GM12878 (cell line): ENCODE measurements at regions of chr1 and their contacts with region 1.

Region 1: GRCh38 chr1:62407405-62408009 is 29.3 kb upstream of the USP1 start:
- DNase-seq: no peak
- ATAC-seq: peak; percentile 74
- H3K4me3 ChIP-seq: no peak overlapping the region
- H3K27ac ChIP-seq: no peak overlapping the region
- H3K4me1 ChIP-seq: no peaks in the 10 kb centered on the region
- H3K27me3 ChIP-seq: no peaks in the 10 kb centered on the region; a peak in 1 of 4 replicates
- CTCF ChIP-seq: peak; percentile 64 to 73 (median 71)
- EP300 ChIP-seq: no peak
- POLR2A ChIP-seq: no peak
- RAD21 ChIP-seq: peak; percentile 82

Region 2: GRCh38 chr1:62175568-62176179 is 231.8 kb before region 1 on chr1:
- CTCF ChIA-PET with region 1: interaction called, 51 read pairs
- POLR2A ChIA-PET with region 1: no interaction called
- RAD21 ChIA-PET with region 1: interaction called, 24 read pairs
- SMC1A ChIA-PET with region 1: interaction called, 25 read pairs
- in situ Hi-C with region 1: loop called (anchors 5 kb)
- intact Hi-C with region 1: loop called (anchors 1 kb)
- DNase-seq: no peak
- ATAC-seq: peak; percentile 75
- H3K4me3 ChIP-seq: no peak overlapping the region
- H3K27ac ChIP-seq: no peak overlapping the region
- H3K4me1 ChIP-seq: no peaks in the 10 kb centered on the region
- H3K27me3 ChIP-seq: no peaks in the 10 kb centered on the region
- CTCF ChIP-seq: peak; percentile 64 to 71 (median 69); a peak in 5 of 6 replicates
- EP300 ChIP-seq: no peak
- POLR2A ChIP-seq: no peak
- RAD21 ChIP-seq: peak; percentile 88

Region 3: GRCh38 chr1:62295921-62296491 is 111.5 kb before region 1 on chr1:
- CTCF ChIA-PET with region 1: no interaction called
- POLR2A ChIA-PET with region 1: no interaction called
- RAD21 ChIA-PET with region 1: no interaction called
- SMC1A ChIA-PET with region 1: interaction called, 5 read pairs
- in situ Hi-C with region 1: no loop called
- intact Hi-C with region 1: loop called (anchors 10 kb)
- DNase-seq: peak; percentile 8
- ATAC-seq: no peak; the same call in 1 of the 3 replicates
- H3K4me3 ChIP-seq: no peak overlapping the region
- H3K27ac ChIP-seq: no peak overlapping the region
- H3K4me1 ChIP-seq: no peaks in the 10 kb centered on the region
- H3K27me3 ChIP-seq: peaks cover 1 to 4% of the 10 kb centered on the region in 2 experiments; a peak in 2 of 4 replicates
- CTCF ChIP-seq: no peak
- EP300 ChIP-seq: no peak
- POLR2A ChIP-seq: no peak
- RAD21 ChIP-seq: no peak

Region 4: DNA sequence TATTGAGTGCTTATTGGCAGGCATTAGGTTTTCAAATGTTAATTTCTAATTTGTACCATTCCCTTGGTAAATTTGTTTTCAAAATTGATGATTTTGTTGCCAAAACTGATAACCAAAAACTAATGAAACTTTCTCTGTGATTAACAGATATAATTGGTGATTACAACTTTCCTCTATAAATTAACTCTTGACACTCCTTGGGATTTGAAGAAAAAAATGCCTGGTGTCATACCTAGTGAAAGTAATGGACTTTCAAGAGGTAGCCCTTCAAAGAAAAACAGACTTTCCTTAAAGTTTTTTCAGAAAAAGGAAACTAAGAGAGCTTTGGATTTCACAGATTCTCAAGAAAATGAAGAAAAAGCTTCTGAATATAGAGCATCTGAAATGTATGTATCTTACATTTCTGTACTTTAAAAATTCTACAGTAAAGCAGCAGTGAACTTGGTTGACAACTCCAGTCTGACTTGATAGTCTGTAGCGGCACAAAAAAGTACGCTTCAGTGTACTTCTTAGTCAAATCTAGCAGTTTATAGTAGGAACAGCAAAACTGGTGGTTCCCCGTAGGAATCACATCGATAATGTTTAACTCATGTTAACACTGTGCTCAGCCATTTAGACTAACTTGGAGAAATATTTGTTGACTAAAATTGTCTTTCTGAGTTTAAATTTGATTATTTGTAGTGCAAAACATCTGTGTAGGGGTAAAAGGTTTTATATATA is 32.3 kb after region 1 on chr1:
- CTCF ChIA-PET with region 1: no interaction called
- POLR2A ChIA-PET with region 1: no interaction called
- RAD21 ChIA-PET with region 1: no interaction called
- SMC1A ChIA-PET with region 1: no interaction called
- in situ Hi-C with region 1: no loop called
- intact Hi-C with region 1: no loop called
- DNase-seq: peak; percentile 32
- ATAC-seq: peak; percentile 34
- H3K4me3 ChIP-seq: peak overlapping the region; percentile 88
- H3K27ac ChIP-seq: peak overlapping the region; percentile 95
- H3K4me1 ChIP-seq: no peaks in the 10 kb centered on the region
- H3K27me3 ChIP-seq: no peaks in the 10 kb centered on the region
- CTCF ChIP-seq: 0 out of 6 replicates have a peak, but pooled peaks of 1 of the 3 experiments have one; percentile 10
- EP300 ChIP-seq: no peak
- POLR2A ChIP-seq: no peak
- RAD21 ChIP-seq: no peak